T-cell (primary cell): ENCODE measurements at regions of chr11 and their contacts with region 1.

Region 1: GRCh38 chr11:111766093-111766833 is at the start of gene PPP2R1B:
- DNase-seq: peak; percentile 27 to 80 (median 58)
- ATAC-seq: peak; percentile 98 to 99 (median 98)
- H3K4me3 ChIP-seq: peak within 1 kb of the TSS; percentile 94
- H3K4me3 Mint-ChIP-seq: peak within 1 kb of the TSS; percentile 82 to 100 (median 99)
- H3K27ac ChIP-seq: peak within 1 kb of the TSS; percentile 65
- H3K27ac Mint-ChIP-seq: peak within 1 kb of the TSS; percentile 93 to 96
- H3K4me1 ChIP-seq: peaks cover 8 to 15% of the 10 kb centered on the region in 2 experiments
- H3K4me1 Mint-ChIP-seq: peaks cover 38 to 41% (median 39%) of the 10 kb centered on the region in 3 donors
- H3K27me3 ChIP-seq: no peaks in the 10 kb centered on the region
- H3K27me3 Mint-ChIP-seq: no peaks in the 10 kb centered on the region
- total RNA-seq, gene PPP2R1B: 34.2 to 44.1 (median 37.4) TPM

Region 2: GRCh38 chr11:111586388-111586831 is 179.9 kb before region 1 on chr11:
- CTCF ChIA-PET with region 1: interaction called in 1 of 2 experiments, 11 read pairs
- POLR2A ChIA-PET with region 1: no interaction called
- DNase-seq: peak in 28 of 35 experiments; percentile 6 to 78 (median 40)
- ATAC-seq: peak; percentile 61 to 75 (median 63)
- H3K4me3 ChIP-seq: no peak overlapping the region
- H3K4me3 Mint-ChIP-seq: no peak overlapping the region
- H3K27ac ChIP-seq: no peak overlapping the region
- H3K27ac Mint-ChIP-seq: no peak overlapping the region
- H3K4me1 ChIP-seq: peaks cover 0 to 4% of the 10 kb centered on the region in 2 experiments
- H3K4me1 Mint-ChIP-seq: no peaks in the 10 kb centered on the region
- H3K27me3 ChIP-seq: no peaks in the 10 kb centered on the region
- H3K27me3 Mint-ChIP-seq: peaks cover 3 to 4% of the 10 kb centered on the region in 2 donors

Region 3: DNA sequence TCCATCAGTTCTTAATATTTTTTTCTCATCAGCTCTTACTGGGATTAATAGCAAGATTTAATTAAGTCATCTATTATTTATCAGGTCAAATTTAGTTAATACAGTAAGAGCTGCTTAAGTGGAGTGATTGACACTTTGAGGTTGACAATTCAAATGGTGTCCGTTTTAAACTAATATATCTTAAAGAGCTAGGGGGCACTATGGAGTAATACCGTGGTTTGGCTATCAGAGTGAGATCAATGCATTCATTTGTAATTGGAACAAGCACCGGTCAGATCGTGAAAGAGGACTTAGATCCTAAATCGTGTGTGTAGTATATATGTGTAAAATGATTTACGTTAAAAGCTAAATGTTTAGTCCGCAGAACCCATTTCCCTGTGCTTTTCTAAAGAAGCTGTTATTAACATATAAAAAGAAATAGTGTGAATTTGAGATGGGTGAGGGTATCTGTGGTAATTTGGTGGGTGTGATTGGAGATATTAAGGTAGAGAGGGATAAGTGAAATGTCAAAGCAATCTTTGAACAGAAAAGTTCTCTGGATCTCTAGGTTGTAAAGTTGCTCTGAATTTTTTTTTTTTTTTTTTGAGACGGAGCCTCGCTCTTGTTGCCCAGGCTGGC is 161.8 kb before region 1 on chr11:
- CTCF ChIA-PET with region 1: interaction called in 1 of 2 experiments, 17 read pairs
- POLR2A ChIA-PET with region 1: interaction called in 1 of 2 experiments, 3 read pairs
- DNase-seq: peak in 1 of 35 experiments; percentile 56
- ATAC-seq: no peak
- H3K4me3 ChIP-seq: no peak overlapping the region
- H3K4me3 Mint-ChIP-seq: peak overlapping the region in 2 of 3 donors; percentile 84 to 100
- H3K27ac ChIP-seq: no peak overlapping the region
- H3K27ac Mint-ChIP-seq: no peak overlapping the region
- H3K4me1 ChIP-seq: peaks cover 11 to 21% of the 10 kb centered on the region in 2 experiments
- H3K4me1 Mint-ChIP-seq: peaks cover 26 to 35% (median 29%) of the 10 kb centered on the region in 3 donors
- H3K27me3 ChIP-seq: no peaks in the 10 kb centered on the region
- H3K27me3 Mint-ChIP-seq: no peaks in the 10 kb centered on the region

Region 4: GRCh38 chr11:111777094-111778046 is 11.1 kb after region 1 on chr11:
- CTCF ChIA-PET with region 1: interaction called, 8 to 23 read pairs
- POLR2A ChIA-PET with region 1: interaction called in 1 of 2 experiments, 5 read pairs
- DNase-seq: peak in 14 of 35 experiments; percentile 4 to 78 (median 10)
- ATAC-seq: peak; percentile 72 to 88 (median 80)
- H3K4me3 ChIP-seq: no peak overlapping the region
- H3K4me3 Mint-ChIP-seq: no peak overlapping the region
- H3K27ac ChIP-seq: no peak overlapping the region
- H3K27ac Mint-ChIP-seq: no peak overlapping the region
- H3K4me1 ChIP-seq: no peaks in the 10 kb centered on the region
- H3K4me1 Mint-ChIP-seq: peaks cover 0 to 3% (median 0%) of the 10 kb centered on the region in 3 donors
- H3K27me3 ChIP-seq: no peaks in the 10 kb centered on the region
- H3K27me3 Mint-ChIP-seq: no peaks in the 10 kb centered on the region

Region 5: GRCh38 chr11:111808063-111808588 is 41.9 kb after region 1 on chr11:
- CTCF ChIA-PET with region 1: no interaction called
- POLR2A ChIA-PET with region 1: no interaction called
- DNase-seq: no peak
- ATAC-seq: no peak
- H3K4me3 ChIP-seq: no peak overlapping the region
- H3K4me3 Mint-ChIP-seq: no peak overlapping the region
- H3K27ac ChIP-seq: no peak overlapping the region
- H3K27ac Mint-ChIP-seq: no peak overlapping the region
- H3K4me1 ChIP-seq: no peaks in the 10 kb centered on the region
- H3K4me1 Mint-ChIP-seq: no peaks in the 10 kb centered on the region
- H3K27me3 ChIP-seq: no peaks in the 10 kb centered on the region
- H3K27me3 Mint-ChIP-seq: no peaks in the 10 kb centered on the region

Region 6: GRCh38 chr11:111860257-111860656 is 94.0 kb after region 1 on chr11:
- CTCF ChIA-PET with region 1: no interaction called
- POLR2A ChIA-PET with region 1: interaction called in 1 of 2 experiments, 10 read pairs
- DNase-seq: no peak
- ATAC-seq: no peak
- H3K4me3 ChIP-seq: no peak overlapping the region
- H3K4me3 Mint-ChIP-seq: no peak overlapping the region
- H3K27ac ChIP-seq: no peak overlapping the region
- H3K27ac Mint-ChIP-seq: no peak overlapping the region
- H3K4me1 ChIP-seq: no peaks in the 10 kb centered on the region
- H3K4me1 Mint-ChIP-seq: no peaks in the 10 kb centered on the region
- H3K27me3 ChIP-seq: no peaks in the 10 kb centered on the region
- H3K27me3 Mint-ChIP-seq: no peaks in the 10 kb centered on the region